ENCODE measurements at regions of chr2 and their contacts with region 1.

Region 1: DNA sequence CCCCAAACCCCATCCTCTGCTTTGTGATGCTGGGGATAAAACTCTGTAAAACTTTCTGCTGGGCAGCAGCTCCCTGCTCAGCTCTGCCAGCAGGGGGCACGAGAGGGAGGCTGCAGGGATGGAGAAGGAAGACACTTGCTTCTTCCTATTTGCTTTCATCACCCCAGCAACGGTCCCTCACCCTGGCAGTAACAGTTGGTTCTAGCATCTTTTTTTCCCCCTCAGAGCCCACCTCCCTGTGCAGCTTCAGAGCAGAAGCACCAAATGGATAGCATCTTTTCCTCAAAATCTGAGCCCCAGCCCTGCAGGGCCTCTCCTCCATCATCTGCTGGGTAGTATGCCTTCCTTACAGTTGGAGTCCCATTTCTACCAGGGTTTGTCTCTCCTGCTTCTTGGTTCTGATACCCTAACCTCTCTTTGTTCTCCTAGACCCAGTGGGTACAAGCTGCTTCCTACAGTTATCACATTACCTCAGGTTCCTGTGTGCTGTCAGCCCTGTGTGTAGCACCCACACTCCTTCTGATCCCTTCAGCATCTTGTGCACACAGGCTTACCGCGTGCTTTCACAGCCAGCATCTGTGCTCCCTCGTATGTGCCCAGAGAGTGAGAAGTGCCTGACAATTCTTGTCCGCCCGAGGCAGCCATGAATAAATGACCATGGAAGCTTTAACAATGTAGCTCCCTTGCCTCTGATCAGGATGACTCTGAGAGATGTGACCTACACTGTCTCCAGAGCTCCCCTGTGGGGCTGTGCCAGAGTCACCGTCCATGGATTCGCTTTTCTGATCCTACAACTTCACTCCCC is 14.5 kb downstream of the CKAP2L start:
- DNase-seq: peak; percentile 71 to 79
- ATAC-seq: peak; percentile 95

Region 2: GRCh38 chr2:112941753-112942658 is 192.0 kb after region 1 on chr2:
- intact Hi-C with region 1: loop called in 1 of 2 experiments (anchors 5 kb)
- DNase-seq: peak; percentile 80 to 89
- ATAC-seq: peak; percentile 99

Region 3: DNA sequence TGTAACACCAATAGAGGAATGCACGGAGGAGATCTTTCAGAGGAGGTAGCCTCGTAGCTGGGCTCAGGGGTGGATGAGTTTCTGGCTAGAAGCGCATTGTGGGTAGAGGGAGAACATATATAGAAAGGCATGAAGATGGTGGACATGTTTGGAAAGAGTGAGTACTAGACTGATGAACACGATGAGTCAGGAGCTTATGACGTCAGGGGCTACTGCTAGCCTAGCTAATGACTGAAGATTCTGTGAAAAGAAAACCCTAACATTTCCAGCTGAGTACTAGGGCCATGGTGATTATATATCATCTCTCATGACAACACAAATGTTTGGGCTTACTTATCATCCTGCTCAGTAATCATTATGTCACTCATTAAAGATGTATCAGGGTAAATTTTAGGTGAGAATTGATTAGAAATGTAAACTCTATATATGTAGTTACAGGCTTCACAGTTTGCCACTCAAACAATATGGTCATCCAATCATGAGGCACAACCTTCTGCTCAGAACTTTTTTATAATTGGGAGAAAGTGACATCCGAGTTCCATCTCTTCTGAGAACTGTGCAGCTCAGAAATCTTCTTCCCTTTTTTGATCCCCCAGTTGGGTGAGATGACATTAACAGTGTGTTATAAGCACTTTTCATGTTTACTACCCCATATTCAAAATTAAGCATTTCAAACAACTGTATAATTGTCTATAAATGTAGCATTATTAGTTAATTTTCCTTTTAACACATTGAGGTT is 355.3 kb after region 1 on chr2:
- intact Hi-C with region 1: no loop called
- DNase-seq: no peak
- ATAC-seq: no peak